AG04450 (cell line): ENCODE measurements at regions of chr2 and their contacts with region 1.

Region 1: DNA sequence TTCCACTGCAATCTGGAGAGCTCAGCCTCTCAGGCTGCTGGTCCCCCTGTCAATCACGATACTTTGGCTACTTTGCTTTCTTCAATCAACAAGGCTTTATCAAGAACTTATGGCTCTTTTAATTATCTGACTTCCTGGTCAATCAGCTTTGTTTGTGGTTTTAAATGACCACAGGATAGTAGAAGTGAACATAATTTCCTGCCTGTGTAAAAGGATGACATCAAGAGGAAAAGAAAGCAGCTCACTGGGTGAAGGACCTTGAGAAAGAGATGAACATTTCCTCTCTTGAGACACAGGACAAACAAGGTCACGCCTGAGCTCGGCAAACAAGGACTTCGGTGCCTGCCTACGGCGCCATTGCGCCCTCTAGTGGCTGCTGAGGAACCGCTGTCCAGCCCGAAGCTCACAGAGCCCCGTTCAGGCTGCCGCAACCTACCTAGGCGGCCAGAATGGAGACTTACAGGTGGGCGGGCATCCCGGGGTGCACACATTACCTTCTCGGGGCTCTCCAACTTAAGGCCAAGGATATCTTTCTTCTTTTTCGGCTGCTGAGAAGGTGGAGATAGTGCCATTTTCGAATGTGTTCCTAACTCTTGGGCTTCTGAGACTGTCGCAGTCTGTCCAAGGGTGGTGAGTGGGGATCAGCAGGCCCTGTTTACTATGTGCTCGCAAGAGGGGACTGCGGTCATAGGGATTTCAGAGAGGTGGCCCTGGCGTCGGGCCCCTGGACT is 54.0 kb downstream of the IL1RL2 start:
- DNase-seq: peak; percentile 86
- H3K4me3 ChIP-seq: no peak overlapping the region
- H3K27ac ChIP-seq: peak overlapping the region; percentile 49
- H3K27me3 ChIP-seq: no peaks in the 10 kb centered on the region
- CTCF ChIP-seq: peak; percentile 99

Region 2: DNA sequence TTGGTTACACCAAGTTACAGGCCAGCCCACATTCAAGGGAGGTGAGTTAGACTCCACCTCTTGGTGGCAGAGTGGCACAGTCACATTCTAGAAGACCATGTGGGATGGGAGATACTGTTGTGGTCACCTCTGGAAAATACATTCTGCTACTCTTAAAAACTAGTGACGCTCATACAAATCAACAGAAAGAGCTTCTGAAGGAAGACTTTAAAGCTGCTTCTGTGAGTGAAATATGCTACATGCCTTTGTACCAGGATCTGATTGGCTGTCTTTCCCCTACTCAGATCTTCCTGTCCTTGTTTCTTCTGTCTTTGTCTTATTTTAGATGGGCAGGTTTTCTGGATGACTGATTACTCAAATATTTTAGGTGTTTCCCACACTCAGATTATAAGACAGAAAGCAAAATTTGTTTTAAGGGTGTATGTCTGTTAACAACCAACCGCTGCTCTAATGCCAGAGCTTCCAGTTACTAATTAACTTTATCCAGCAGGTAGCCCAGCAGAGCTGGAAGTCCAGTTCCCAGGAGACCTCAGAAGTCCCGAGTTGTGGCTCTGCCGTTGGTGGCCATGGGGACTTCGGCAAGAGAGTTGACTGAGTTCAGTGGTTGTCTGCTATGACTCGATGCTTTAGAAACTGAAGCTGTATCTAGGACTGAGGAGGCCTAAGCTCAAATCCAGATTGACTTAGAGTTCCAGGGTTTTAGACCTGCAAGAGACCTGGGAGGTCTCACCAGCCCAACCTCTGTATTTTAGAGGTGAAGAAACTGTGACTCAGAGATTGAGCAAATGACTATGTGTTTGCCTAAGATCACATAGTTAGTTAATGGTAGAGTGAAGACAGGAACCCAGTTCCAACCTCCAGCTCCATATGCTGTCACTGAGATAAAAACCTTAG is 241.7 kb before region 1 on chr2:
- CTCF ChIA-PET with region 1: interaction called, 99 read pairs
- POLR2A ChIA-PET with region 1: no interaction called
- DNase-seq: no peak
- H3K4me3 ChIP-seq: no peak overlapping the region
- H3K27ac ChIP-seq: no peak overlapping the region
- H3K27me3 ChIP-seq: peaks cover 26% of the 10 kb centered on the region
- CTCF ChIP-seq: no peak

Region 3: GRCh38 chr2:102033031-102033749 is 207.6 kb before region 1 on chr2:
- CTCF ChIA-PET with region 1: interaction called, 14 read pairs
- POLR2A ChIA-PET with region 1: no interaction called
- DNase-seq: peak; percentile 69
- H3K4me3 ChIP-seq: no peak overlapping the region
- H3K27ac ChIP-seq: peak overlapping the region; percentile 75
- H3K27me3 ChIP-seq: no peaks in the 10 kb centered on the region
- CTCF ChIP-seq: peak; percentile 47

Region 4: DNA sequence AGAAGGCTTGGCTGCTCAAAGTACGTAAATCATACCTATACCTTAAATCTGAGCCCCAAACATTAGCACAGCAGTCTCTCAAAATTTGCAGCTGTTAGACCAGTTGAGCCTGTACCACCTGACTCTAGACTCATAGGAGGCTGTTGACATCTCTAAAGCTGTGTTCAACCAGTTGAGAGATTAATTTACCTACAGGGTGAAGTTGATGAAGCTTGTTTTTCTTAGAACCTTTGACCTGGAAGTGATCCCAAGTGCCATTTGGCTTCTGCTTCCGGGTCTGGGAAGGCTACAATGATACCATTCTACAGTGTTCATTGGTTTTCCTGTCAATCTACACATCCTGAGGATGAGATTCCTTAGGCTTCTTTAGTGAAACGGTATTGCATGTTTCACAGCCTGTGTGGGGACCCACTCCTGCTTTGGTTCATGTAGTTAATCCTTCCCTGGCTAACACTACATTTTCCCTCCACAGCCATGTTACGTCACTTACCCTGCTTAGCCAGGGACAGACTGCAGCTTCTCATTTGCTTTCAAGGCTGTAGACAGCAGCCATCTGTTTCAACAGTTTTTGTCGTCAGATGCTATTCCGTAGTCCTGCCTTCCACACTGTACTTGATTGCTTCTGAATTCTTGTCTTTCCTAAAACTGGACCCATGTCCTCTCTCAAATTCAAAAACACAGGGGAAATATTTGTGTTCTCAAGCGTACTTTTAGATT is 58.7 kb before region 1 on chr2:
- CTCF ChIA-PET with region 1: interaction called, 32 read pairs
- POLR2A ChIA-PET with region 1: interaction called, 3 read pairs
- DNase-seq: no peak
- H3K4me3 ChIP-seq: no peak overlapping the region
- H3K27ac ChIP-seq: no peak overlapping the region
- H3K27me3 ChIP-seq: no peaks in the 10 kb centered on the region
- CTCF ChIP-seq: no peak

Region 5: DNA sequence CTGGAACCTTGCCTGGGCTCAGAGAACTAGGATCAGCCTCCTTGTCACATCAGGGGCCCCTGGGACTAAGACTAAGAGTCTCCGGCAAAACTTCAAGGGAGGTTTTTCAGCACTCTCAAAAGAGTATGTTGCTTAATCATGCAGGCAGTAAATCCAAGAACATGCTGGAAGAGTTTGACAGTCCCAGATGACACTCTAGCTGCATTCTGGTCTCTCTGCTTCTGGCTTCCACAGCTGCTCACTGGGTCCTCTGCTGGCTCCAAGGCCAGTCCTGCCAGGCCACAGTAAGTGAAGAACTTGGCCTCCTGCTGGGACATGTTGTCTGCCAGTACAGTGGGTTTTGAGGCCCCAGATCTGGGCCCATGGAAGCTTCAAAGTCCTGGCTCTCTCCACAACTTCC is 25.4 kb after region 1 on chr2:
- CTCF ChIA-PET with region 1: interaction called, 25 read pairs
- POLR2A ChIA-PET with region 1: no interaction called
- DNase-seq: no peak
- H3K4me3 ChIP-seq: no peak overlapping the region
- H3K27ac ChIP-seq: no peak overlapping the region
- H3K27me3 ChIP-seq: no peaks in the 10 kb centered on the region
- CTCF ChIP-seq: no peak

Region 6: DNA sequence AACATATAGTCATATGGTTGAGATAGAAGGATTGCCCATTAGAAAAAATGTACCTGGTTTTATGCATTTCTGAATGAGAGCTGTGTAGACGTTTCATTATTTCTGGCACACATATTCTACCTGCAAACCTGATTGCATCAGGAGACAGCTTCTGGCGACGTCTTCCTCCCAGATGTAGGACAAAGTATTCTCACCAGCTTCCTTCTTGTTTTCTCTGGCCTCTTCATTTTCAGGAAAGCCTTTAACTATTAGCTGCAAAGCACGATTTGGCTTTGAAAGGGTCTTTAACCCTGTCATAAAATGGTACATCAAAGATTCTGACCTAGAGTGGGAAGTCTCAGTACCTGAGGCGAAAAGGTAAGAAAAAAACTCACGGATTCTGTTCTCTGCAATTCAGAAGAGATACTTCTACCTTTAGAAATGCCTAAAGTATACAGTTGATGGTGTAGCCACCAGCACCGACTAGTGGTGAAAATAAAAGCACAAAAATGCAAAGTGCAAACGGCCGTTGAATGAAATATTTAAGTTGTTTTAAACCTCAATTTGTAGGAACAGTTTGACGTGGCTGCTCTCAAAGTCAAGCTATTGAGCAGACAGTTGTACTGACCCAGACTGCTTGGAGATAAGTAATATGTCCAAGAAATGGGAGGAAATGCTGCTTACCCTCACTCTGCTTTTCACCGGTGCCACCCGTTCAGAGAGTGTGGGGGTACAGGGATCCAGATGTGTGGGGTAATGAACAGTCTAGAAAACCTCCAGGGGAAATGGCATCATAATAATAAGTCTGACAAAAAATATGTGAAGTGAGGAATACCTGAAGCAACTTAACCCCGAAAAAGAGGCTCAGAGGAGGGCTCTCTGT is 202.4 kb after region 1 on chr2:
- CTCF ChIA-PET with region 1: interaction called, 23 read pairs
- POLR2A ChIA-PET with region 1: no interaction called
- DNase-seq: no peak
- H3K4me3 ChIP-seq: no peak overlapping the region
- H3K27ac ChIP-seq: no peak overlapping the region
- H3K27me3 ChIP-seq: no peaks in the 10 kb centered on the region
- CTCF ChIP-seq: peak; percentile 87